Aorta (tissue), 5 donors: ENCODE measurements at regions of chr11 and their contacts with region 1.

Region 1: DNA sequence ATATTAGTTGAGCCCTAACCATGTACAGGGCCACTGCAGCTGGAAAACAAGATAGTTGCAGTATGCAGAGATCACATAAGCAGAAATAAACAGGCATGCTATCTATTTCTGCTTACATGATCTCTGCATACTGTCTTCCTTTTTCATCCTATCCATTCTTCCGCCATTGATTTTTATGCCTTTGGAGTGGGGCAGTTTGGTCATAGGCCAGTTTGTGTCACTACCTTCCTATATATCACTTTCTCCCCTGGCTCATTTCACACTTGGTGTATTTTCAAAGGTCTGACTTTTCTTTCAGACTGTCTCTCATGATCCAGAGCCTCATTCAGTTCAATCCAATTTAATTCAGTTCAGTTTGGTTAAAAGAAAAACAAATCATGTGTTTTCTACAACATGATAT is 829.6 kb downstream of the KCNA4 start:
- DNase-seq: no peak
- ATAC-seq: no peak
- H3K4me3 ChIP-seq: no peak overlapping the region
- H3K27ac ChIP-seq: no peak overlapping the region
- H3K4me1 ChIP-seq: no peaks in the 10 kb centered on the region
- H3K27me3 ChIP-seq: no peaks in the 10 kb centered on the region

Region 2: DNA sequence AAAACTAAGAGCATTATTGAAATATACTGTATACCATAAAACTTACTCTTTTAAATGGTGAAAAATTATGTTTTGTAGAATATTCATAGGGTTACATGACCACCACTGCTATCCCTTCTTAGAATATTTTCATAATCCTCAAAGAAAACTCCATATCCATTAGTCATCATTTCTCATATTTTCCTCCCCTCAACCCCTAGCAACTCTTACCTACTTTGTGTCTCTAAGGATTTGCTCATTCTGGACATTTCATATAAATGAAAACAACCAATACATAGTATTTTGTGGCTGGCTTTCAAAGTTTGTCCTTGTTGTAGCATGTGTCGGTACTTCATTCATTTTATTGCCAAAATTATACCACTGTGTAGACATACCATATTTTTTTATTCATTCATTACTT is 34.1 kb before region 1 on chr11:
- intact Hi-C with region 1: loop called in 1 of 2 experiments (anchors 2 kb)
- DNase-seq: no peak
- ATAC-seq: no peak
- H3K4me3 ChIP-seq: no peak overlapping the region
- H3K27ac ChIP-seq: no peak overlapping the region
- H3K4me1 ChIP-seq: no peaks in the 10 kb centered on the region
- H3K27me3 ChIP-seq: no peaks in the 10 kb centered on the region